ENCODE measurements at regions of chr7 and their contacts with region 1.

Region 1: GRCh38 chr7:106947244-106947728 is 82.2 kb downstream of the PIK3CG start:
- DNase-seq: peak in 2 of 3 donors; percentile 37 to 48
- ATAC-seq: peak; percentile 91 to 92
- H3K4me3 ChIP-seq: no peak overlapping the region
- H3K27ac ChIP-seq: no peak overlapping the region
- H3K4me1 ChIP-seq: no peaks in the 10 kb centered on the region
- H3K27me3 ChIP-seq: no peaks in the 10 kb centered on the region

Region 2: DNA sequence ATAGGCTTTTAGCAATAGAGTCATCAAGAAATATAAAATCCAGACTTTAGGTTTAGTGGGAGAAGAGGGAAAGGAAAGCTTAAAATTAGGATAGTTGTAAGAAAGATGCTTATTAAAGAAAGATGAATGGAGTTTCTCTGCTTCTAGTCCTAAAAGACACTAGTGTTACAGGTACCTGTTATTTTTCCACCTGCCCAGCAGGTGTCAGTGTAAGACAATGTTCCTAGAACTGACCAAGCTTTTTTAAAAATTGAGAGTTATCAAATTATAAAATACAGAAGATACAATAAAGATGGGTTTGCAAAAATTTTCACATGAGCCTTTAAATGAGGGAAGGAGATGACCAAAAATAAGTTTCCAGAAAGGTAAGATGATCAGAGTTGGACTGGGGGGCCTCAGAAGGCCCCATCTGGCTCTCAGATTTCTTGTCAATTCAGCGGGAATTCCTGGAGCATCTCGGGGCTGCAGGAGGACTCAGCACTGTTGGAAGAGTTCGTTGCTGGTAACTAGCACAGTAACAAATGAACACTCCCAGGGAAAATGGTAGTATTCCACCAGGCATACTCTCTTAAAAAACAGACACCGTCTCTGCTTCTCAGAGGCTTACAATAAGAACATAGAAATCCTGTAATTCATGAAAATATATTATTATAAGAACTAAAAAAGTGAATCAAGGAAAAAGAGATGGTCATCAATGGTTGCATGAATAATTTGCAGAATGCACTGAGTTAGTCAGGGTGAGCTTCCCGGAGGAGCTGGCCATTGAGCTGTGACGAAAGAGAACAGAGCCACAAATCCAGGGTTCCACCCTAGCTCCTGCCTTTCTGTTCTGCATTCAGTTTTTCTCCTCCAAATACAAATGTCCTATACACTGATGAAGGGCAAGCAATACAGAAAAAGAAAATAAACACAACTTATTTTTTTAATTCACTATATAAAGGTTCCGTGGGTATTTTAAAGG is 154.0 kb before region 1 on chr7:
- intact Hi-C with region 1: loop called in 1 of 4 experiments (anchors 10 kb)
- DNase-seq: no peak
- ATAC-seq: no peak
- H3K4me3 ChIP-seq: no peak overlapping the region
- H3K27ac ChIP-seq: no peak overlapping the region
- H3K4me1 ChIP-seq: no peaks in the 10 kb centered on the region
- H3K27me3 ChIP-seq: no peaks in the 10 kb centered on the region